B cell (primary cell): ENCODE measurements at regions of chr11 and their contacts with region 1.

Region 1: GRCh38 chr11:3854977-3855807 is at the start of gene STIM1:
- DNase-seq: peak; percentile 97
- ATAC-seq: peak; percentile 74
- H3K4me3 ChIP-seq: peak within 1 kb of the TSS; percentile 78 to 93 (median 91)
- H3K4me3 Mint-ChIP-seq: peak within 1 kb of the TSS; percentile 98
- H3K27ac ChIP-seq: peak within 1 kb of the TSS; percentile 98 to 99
- H3K27ac Mint-ChIP-seq: peak within 1 kb of the TSS; percentile 99
- H3K4me1 ChIP-seq: peaks cover 61 to 63% of the 10 kb centered on the region in 2 donors
- H3K4me1 Mint-ChIP-seq: peaks cover 61% of the 10 kb centered on the region
- H3K27me3 ChIP-seq: no peaks in the 10 kb centered on the region
- H3K27me3 Mint-ChIP-seq: no peaks in the 10 kb centered on the region
- CTCF ChIP-seq: peak; percentile 90
- total RNA-seq, gene STIM1: 74.8 and 76.7 TPM in 2 replicates

Region 2: GRCh38 chr11:3807909-3808860 is 47.0 kb before region 1 on chr11 and contains the start of gene PGAP2:
- CTCF ChIA-PET with region 1: interaction called, 28 read pairs
- POLR2A ChIA-PET with region 1: no interaction called
- intact Hi-C with region 1: no loop called
- DNase-seq: peak; percentile 71
- ATAC-seq: peak; percentile 85
- H3K4me3 ChIP-seq: peak within 1 kb of the TSS; percentile 91 to 99 (median 96)
- H3K4me3 Mint-ChIP-seq: peak within 1 kb of the TSS; percentile 98
- H3K27ac ChIP-seq: peak within 1 kb of the TSS; percentile 59 to 60
- H3K27ac Mint-ChIP-seq: peak within 1 kb of the TSS; percentile 92
- H3K4me1 ChIP-seq: peaks cover 6 to 17% of the 10 kb centered on the region in 2 donors
- H3K4me1 Mint-ChIP-seq: peaks cover 11% of the 10 kb centered on the region
- H3K27me3 ChIP-seq: no peaks in the 10 kb centered on the region
- H3K27me3 Mint-ChIP-seq: no peaks in the 10 kb centered on the region
- CTCF ChIP-seq: peak; percentile 61
- total RNA-seq, gene PGAP2: 20.5 and 20.8 TPM in 2 replicates

Region 3: GRCh38 chr11:3873712-3874349 is 18.6 kb after region 1 on chr11:
- CTCF ChIA-PET with region 1: interaction called, 662 read pairs
- POLR2A ChIA-PET with region 1: interaction called, 19 read pairs
- intact Hi-C with region 1: no loop called
- DNase-seq: no peak
- ATAC-seq: peak; percentile 70
- H3K4me3 ChIP-seq: no peak overlapping the region
- H3K4me3 Mint-ChIP-seq: peak overlapping the region; percentile 57
- H3K27ac ChIP-seq: peak overlapping the region; percentile 1 to 67
- H3K27ac Mint-ChIP-seq: peak overlapping the region; percentile 83
- H3K4me1 ChIP-seq: peaks cover 63 to 71% of the 10 kb centered on the region in 2 donors
- H3K4me1 Mint-ChIP-seq: peaks cover 84% of the 10 kb centered on the region
- H3K27me3 ChIP-seq: no peaks in the 10 kb centered on the region
- H3K27me3 Mint-ChIP-seq: no peaks in the 10 kb centered on the region
- CTCF ChIP-seq: no peak

Region 4: DNA sequence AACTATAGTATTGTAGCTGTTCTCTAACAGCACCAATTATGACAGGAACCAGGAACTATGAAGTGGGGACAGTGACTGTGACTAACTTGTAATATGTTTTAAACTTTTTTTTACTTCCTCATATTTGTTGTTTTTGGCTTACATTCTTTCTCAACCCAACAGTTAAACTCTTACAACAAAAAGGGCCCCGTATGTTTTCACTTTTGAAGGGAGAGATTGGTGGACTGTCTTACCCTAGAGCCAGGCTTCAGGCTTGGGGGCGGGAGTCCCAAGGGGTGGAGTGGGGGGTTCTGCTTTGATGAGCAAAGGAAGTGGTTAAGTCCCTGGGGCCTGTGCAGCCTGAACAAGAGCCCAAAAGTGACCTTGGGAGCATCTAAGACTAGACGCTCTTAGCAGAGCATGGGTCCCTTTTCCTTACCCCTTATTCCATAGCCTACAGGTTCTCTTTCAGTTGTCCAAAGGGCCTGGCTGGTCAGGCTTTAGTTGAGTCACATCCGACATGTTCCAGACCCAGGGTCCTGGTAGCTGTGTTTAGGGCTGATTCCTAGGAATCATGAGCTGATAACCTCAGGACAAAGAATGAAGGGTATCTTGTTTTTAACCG is 39.0 kb after region 1 on chr11:
- CTCF ChIA-PET with region 1: interaction called, 71 read pairs
- POLR2A ChIA-PET with region 1: interaction called, 25 read pairs
- intact Hi-C with region 1: loop called (anchors 1 kb)
- DNase-seq: peak; percentile 95
- ATAC-seq: peak; percentile 98
- H3K4me3 ChIP-seq: peak overlapping the region in 4 of 5 experiments; percentile 23 to 53 (median 32)
- H3K4me3 Mint-ChIP-seq: peak overlapping the region; percentile 78
- H3K27ac ChIP-seq: peak overlapping the region; percentile 71 to 82
- H3K27ac Mint-ChIP-seq: peak overlapping the region; percentile 89
- H3K4me1 ChIP-seq: peaks cover 67 to 72% of the 10 kb centered on the region in 2 donors
- H3K4me1 Mint-ChIP-seq: peaks cover 70% of the 10 kb centered on the region
- H3K27me3 ChIP-seq: no peaks in the 10 kb centered on the region
- H3K27me3 Mint-ChIP-seq: no peaks in the 10 kb centered on the region
- CTCF ChIP-seq: no peak

Region 5: GRCh38 chr11:3929649-3930048 is 74.5 kb after region 1 on chr11:
- CTCF ChIA-PET with region 1: interaction called, 33 read pairs
- POLR2A ChIA-PET with region 1: interaction called, 6 read pairs
- intact Hi-C with region 1: loop called (anchors 5 kb)
- DNase-seq: no peak
- ATAC-seq: no peak
- H3K4me3 ChIP-seq: no peak overlapping the region
- H3K4me3 Mint-ChIP-seq: no peak overlapping the region
- H3K27ac ChIP-seq: peak overlapping the region in 1 of 2 donors; percentile 5
- H3K27ac Mint-ChIP-seq: no peak overlapping the region
- H3K4me1 ChIP-seq: peaks cover 31 to 33% of the 10 kb centered on the region in 2 donors
- H3K4me1 Mint-ChIP-seq: peaks cover 62% of the 10 kb centered on the region
- H3K27me3 ChIP-seq: no peaks in the 10 kb centered on the region
- H3K27me3 Mint-ChIP-seq: no peaks in the 10 kb centered on the region
- CTCF ChIP-seq: no peak

Region 6: GRCh38 chr11:3971756-3972404 is 116.7 kb after region 1 on chr11:
- CTCF ChIA-PET with region 1: interaction called, 35 read pairs
- POLR2A ChIA-PET with region 1: interaction called, 3 read pairs
- intact Hi-C with region 1: no loop called
- DNase-seq: peak; percentile 33
- ATAC-seq: no peak
- H3K4me3 ChIP-seq: no peak overlapping the region
- H3K4me3 Mint-ChIP-seq: no peak overlapping the region
- H3K27ac ChIP-seq: peak overlapping the region in 1 of 2 donors; percentile 19
- H3K27ac Mint-ChIP-seq: no peak overlapping the region
- H3K4me1 ChIP-seq: no peaks in the 10 kb centered on the region
- H3K4me1 Mint-ChIP-seq: peaks cover 23% of the 10 kb centered on the region
- H3K27me3 ChIP-seq: no peaks in the 10 kb centered on the region
- H3K27me3 Mint-ChIP-seq: no peaks in the 10 kb centered on the region
- CTCF ChIP-seq: peak; percentile 35

Region 7: GRCh38 chr11:4125141-4125540 is 269.9 kb after region 1 on chr11:
- CTCF ChIA-PET with region 1: no interaction called
- POLR2A ChIA-PET with region 1: no interaction called
- intact Hi-C with region 1: no loop called
- DNase-seq: no peak
- ATAC-seq: no peak
- H3K4me3 ChIP-seq: no peak overlapping the region
- H3K4me3 Mint-ChIP-seq: no peak overlapping the region
- H3K27ac ChIP-seq: no peak overlapping the region
- H3K27ac Mint-ChIP-seq: no peak overlapping the region
- H3K4me1 ChIP-seq: no peaks in the 10 kb centered on the region
- H3K4me1 Mint-ChIP-seq: no peaks in the 10 kb centered on the region
- H3K27me3 ChIP-seq: no peaks in the 10 kb centered on the region
- H3K27me3 Mint-ChIP-seq: no peaks in the 10 kb centered on the region
- CTCF ChIP-seq: no peak